HepG2 (cell line): ENCODE measurements at regions of chr1 and their contacts with region 1.

Region 1: DNA sequence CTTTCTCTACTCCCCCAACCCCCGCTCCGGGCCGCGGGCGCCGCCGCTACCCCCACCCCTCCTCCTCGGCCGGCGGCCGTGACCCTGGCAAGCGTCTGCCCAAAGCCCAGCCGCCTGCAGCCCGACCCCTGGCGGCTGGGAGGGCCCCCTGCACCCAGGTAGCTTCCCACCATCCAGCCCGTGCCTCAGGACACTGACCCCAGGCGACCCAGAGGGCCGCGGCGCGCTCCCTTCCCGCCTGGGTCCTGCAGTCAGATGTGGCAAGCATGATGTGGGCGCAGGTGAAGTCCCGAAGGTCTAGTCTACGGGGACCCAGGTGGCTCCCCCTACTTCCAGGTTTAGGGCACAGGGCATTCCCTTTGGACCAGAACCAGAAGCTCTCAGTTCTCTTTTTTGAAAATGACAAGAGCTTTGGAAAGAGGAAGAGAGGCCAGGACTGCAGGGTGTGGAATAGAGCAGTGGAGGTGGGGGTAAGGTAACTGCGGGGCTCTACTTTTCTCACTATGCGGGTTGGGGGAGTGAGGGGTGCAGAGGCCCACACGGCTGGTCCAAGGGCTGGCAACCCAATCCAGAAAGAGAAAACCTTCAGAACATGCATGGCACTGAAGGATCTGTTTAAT is at the start of gene DENND4B:
- DNase-seq: peak; percentile 75
- ATAC-seq: peak; percentile 93
- H3K4me3 ChIP-seq: peak within 1 kb of the TSS; percentile 71 to 98 (median 81)
- H3K27ac ChIP-seq: peak within 1 kb of the TSS; percentile 71
- H3K4me1 ChIP-seq: peaks cover 40% of the 10 kb centered on the region
- H3K27me3 ChIP-seq: no peaks in the 10 kb centered on the region
- CTCF ChIP-seq: peak; percentile 92
- EP300 ChIP-seq: 0 out of 4 replicates have a peak, but pooled peaks of 1 of the 2 experiments have one; percentile 31
- POLR2A ChIP-seq: 0 out of 4 replicates have a peak, but pooled peaks of 1 of the 2 experiments have one; percentile 5
- RAD21 ChIP-seq: peak; percentile 85
- total RNA-seq, gene DENND4B: 8.7 and 15.1 TPM in 2 replicates

Region 2: DNA sequence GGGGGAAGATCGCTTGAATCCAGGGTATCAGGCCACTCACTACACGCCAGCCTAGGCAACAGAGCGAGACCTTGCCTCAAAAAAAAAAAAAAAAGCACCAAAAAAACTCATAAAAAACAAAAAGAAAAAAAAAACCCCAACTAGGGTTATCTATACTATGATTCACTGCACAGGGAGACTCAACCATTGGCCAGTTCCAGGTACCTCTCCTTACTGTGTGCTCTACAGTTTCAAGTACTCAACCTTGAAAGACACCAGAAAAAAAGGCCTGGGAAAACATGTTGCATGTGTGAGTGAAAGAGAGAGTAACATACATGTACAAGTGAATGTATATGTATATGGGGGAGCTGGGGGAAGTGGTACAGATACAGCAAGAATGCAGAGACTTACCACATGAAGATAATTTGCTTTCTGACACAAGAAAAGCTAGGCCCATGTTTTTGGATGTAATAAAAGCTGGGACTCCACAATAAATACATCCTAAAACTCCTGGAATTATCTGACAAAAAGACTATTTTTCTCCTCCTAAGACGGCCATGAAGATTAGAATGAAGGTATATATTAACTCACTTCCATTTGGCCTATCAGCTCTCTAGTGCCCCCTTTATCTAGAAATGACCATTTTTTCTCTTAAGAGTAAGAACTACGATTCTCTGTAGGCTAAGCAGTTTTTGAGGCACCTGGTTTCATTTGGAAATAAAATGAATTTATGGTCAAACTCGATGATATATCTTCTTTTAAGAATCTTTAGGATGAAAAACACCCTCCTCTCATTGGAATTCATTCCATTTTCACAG is 119.4 kb before region 1 on chr1:
- CTCF ChIA-PET with region 1: no interaction called
- POLR2A ChIA-PET with region 1: no interaction called
- in situ Hi-C with region 1: loop called (anchors 10 kb)
- intact Hi-C with region 1: no loop called
- DNase-seq: no peak
- ATAC-seq: no peak
- H3K4me3 ChIP-seq: no peak overlapping the region
- H3K27ac ChIP-seq: no peak overlapping the region
- H3K4me1 ChIP-seq: no peaks in the 10 kb centered on the region
- H3K27me3 ChIP-seq: no peaks in the 10 kb centered on the region
- CTCF ChIP-seq: no peak
- EP300 ChIP-seq: no peak
- POLR2A ChIP-seq: no peak
- RAD21 ChIP-seq: no peak

Region 3: DNA sequence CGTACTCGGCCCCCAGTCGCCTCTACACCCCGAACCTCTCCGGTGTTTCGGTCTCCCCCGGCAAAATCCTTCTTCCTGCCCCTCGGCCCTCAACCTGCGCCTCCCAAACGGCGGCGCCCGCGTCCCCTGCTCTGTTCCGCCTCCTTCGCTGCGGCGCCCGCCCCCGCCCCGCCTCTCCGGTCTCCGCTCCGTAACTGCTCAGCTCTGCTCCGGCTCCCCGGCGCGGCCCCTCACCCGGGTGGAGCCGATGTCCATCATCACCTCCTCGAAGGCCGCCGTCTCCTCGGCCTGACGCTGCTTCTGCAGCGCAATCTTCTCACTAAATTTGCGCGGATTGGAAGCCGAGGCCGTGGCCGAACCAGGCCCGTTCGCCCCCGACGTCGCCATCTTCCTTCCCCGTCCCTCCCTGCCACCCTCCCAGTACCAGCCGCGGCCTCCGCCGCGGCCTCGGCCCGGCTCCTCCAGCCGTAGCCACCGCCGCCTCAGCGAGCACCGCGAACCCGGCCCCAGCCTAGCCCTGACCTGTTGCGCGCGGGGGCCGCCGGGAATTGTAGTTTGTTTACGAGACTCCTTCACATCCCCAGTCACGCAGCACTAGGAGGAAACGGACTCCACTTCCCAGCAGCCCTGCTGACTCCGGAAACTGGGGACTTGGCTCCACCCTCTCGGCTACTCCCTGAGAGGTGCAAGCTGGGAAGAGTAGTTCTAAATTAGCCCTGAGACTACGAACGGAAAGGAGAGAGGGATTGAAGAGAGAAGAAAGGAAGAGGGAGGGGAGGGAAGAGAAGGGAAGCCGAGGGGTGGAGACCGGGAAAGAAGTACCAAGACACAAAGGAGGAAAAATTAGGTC is 11.6 kb after region 1 on chr1 and contains the start of gene CRTC2:
- CTCF ChIA-PET with region 1: no interaction called
- POLR2A ChIA-PET with region 1: interaction called, 41 read pairs
- in situ Hi-C with region 1: no loop called
- intact Hi-C with region 1: no loop called
- DNase-seq: peak; percentile 96
- ATAC-seq: peak; percentile 81
- H3K4me3 ChIP-seq: peak within 1 kb of the TSS; percentile 89 to 99 (median 92)
- H3K27ac ChIP-seq: peak within 1 kb of the TSS; percentile 75
- H3K4me1 ChIP-seq: peaks cover 67% of the 10 kb centered on the region
- H3K27me3 ChIP-seq: peaks cover 0 to 7% of the 10 kb centered on the region in 2 experiments; a peak in 1 of 5 replicates
- CTCF ChIP-seq: peak; percentile 40; the same call in 1 of the 2 replicates
- EP300 ChIP-seq: no peak; a peak in 1 of 4 replicates
- POLR2A ChIP-seq: peak in 1 of 2 experiments; percentile 71; a peak in 3 of 4 replicates
- RAD21 ChIP-seq: 0 out of 2 replicates have a peak, but pooled peaks have one; percentile 27
- total RNA-seq, gene CRTC2: 4.0 and 6.1 TPM in 2 replicates

Region 4: GRCh38 chr1:153977250-153978240 is 30.8 kb after region 1 on chr1 and contains the start of gene JTB:
- CTCF ChIA-PET with region 1: no interaction called
- POLR2A ChIA-PET with region 1: interaction called, 26 read pairs
- in situ Hi-C with region 1: no loop called
- intact Hi-C with region 1: no loop called
- DNase-seq: peak; percentile 83
- ATAC-seq: peak; percentile 94
- H3K4me3 ChIP-seq: peak within 1 kb of the TSS; percentile 72 to 79 (median 77)
- H3K27ac ChIP-seq: peak within 1 kb of the TSS; percentile 88
- H3K4me1 ChIP-seq: peaks cover 25% of the 10 kb centered on the region
- H3K27me3 ChIP-seq: no peaks in the 10 kb centered on the region
- CTCF ChIP-seq: no peak; the same call in 1 of the 2 replicates
- EP300 ChIP-seq: no peak
- POLR2A ChIP-seq: peak; percentile 86 to 88
- RAD21 ChIP-seq: 0 out of 2 replicates have a peak, but pooled peaks have one; percentile 30
- total RNA-seq, gene JTB: 66.8 and 99.2 TPM in 2 replicates